T-cell (primary cell): ENCODE measurements at regions of chr19 and their contacts with region 1.

Region 1: GRCh38 chr19:17305517-17306284 is at the start of gene MRPL34:
- DNase-seq: peak; percentile 88 to 97 (median 91)
- ATAC-seq: peak; percentile 61 to 66 (median 63)
- H3K4me3 ChIP-seq: peak within 1 kb of the TSS; percentile 67 to 91
- H3K4me3 Mint-ChIP-seq: peak within 1 kb of the TSS; percentile 80 to 89 (median 85)
- H3K27ac ChIP-seq: peak within 1 kb of the TSS; percentile 59
- H3K27ac Mint-ChIP-seq: peak within 1 kb of the TSS; percentile 89 to 94
- H3K4me1 ChIP-seq: peaks cover 4 to 68% of the 10 kb centered on the region in 2 experiments
- H3K4me1 Mint-ChIP-seq: peaks cover 45 to 58% (median 49%) of the 10 kb centered on the region in 3 donors
- H3K27me3 ChIP-seq: no peaks in the 10 kb centered on the region
- H3K27me3 Mint-ChIP-seq: no peaks in the 10 kb centered on the region
- total RNA-seq, gene MRPL34: 37.6 to 87.0 (median 69.3) TPM

Region 2: DNA sequence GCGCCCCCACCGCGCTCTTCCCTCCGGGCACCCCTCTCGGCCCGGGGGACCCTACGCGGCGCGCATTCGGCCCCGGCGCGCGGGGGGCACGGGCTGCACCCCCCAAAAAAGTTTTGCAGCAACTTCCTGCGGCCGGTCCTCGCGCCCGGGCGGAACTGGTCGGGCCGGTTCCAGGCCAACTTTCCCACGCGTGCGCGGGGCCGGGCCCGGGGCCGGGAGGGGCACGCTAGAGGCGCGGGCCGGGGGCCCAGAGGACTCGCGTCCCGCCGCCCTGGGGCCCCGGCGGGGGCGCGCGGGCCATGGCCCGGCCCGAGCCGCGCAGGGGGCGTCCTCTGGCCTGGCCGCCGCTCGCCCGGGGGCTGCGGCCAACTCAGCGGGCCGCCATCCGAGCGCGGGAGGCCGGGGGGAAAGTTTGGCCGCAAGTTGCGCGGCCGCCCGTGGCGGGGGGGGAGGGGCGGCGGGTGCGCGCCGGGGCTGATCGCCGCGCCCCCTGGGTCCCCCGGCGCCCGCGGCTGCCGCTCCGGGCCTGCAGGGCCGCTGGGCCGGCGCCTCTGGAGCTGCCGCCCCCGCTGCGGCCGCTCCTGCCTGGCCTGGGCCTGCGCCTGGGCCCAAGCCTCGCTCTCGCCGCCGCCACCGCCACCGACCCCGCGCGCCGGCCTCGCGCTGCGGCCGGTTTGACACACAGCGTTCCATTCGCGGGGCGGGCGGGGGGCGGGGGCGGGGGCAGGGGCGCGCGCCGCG is 60.3 kb before region 1 on chr19 and contains the start of gene NR2F6:
- CTCF ChIA-PET with region 1: no interaction called
- POLR2A ChIA-PET with region 1: no interaction called
- DNase-seq: peak in 2 of 35 experiments; percentile 36 to 44
- ATAC-seq: peak; percentile 12 to 36 (median 29)
- H3K4me3 ChIP-seq: peak within 1 kb of the TSS; percentile 68 to 69
- H3K4me3 Mint-ChIP-seq: peak within 1 kb of the TSS; percentile 80 to 86 (median 82)
- H3K27ac ChIP-seq: no peak within 1 kb of the TSS
- H3K27ac Mint-ChIP-seq: peak within 1 kb of the TSS in 1 of 2 donors; percentile 74
- H3K4me1 ChIP-seq: peaks cover 0 to 19% of the 10 kb centered on the region in 2 experiments
- H3K4me1 Mint-ChIP-seq: peaks cover 0 to 16% (median 6%) of the 10 kb centered on the region in 3 donors
- H3K27me3 ChIP-seq: peaks cover 0 to 18% of the 10 kb centered on the region in 2 experiments
- H3K27me3 Mint-ChIP-seq: peaks cover 5 to 7% of the 10 kb centered on the region in 2 donors
- total RNA-seq, gene NR2F6: 0.55 to 6.4 (median 2.8) TPM

Region 3: DNA sequence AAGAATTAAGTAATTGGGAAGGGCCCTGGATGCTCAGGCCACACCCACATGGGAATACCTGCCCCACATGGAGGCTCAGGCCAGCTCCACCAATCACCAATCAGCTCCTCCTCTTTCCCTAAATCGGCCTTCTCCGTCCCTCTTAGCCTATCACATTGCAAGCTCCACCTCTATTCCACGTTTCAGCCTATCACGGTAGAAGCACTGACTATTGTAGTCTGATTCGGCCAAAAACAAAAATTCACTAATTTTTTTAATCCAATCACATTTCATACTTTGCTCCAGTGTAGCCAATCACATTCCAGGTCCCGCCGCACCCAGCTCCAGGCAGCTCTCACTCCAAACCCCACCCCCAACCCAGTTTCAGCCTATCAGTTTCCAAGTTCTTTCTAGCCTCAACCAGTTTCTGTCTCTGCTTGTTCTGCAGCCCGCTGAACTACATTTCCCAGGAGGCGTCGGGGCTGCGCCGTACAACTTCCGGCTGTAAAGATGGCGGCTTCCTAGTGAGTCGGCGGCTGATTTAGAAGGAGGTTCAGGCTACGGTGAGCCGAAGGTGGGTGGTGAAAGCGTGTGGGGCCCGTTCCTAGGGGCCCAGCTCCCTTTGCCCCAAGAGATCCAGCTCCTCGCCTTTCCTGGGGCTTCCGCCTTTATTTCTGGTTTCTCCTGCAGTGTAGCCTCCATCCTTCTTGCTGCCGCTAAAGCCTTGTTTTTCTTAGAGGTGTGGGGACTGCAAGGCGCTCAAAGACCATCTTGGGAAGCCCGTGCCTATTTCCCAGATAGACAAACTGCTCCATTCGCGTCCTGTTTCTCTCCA is 38.5 kb before region 1 on chr19 and contains the start of gene BABAM1:
- CTCF ChIA-PET with region 1: interaction called in 1 of 2 experiments, 20 read pairs
- POLR2A ChIA-PET with region 1: interaction called, 6 read pairs
- DNase-seq: peak; percentile 80 to 99 (median 96)
- ATAC-seq: peak; percentile 92 to 97 (median 96)
- H3K4me3 ChIP-seq: peak within 1 kb of the TSS; percentile 67 to 96
- H3K4me3 Mint-ChIP-seq: peak within 1 kb of the TSS; percentile 80 to 89 (median 85)
- H3K27ac ChIP-seq: peak within 1 kb of the TSS; percentile 59
- H3K27ac Mint-ChIP-seq: peak within 1 kb of the TSS; percentile 62 to 90
- H3K4me1 ChIP-seq: peaks cover 15 to 31% of the 10 kb centered on the region in 2 experiments
- H3K4me1 Mint-ChIP-seq: peaks cover 23 to 30% (median 25%) of the 10 kb centered on the region in 3 donors
- H3K27me3 ChIP-seq: no peaks in the 10 kb centered on the region
- H3K27me3 Mint-ChIP-seq: no peaks in the 10 kb centered on the region
- total RNA-seq, gene BABAM1: 76.7 to 130 (median 117) TPM

Region 4: DNA sequence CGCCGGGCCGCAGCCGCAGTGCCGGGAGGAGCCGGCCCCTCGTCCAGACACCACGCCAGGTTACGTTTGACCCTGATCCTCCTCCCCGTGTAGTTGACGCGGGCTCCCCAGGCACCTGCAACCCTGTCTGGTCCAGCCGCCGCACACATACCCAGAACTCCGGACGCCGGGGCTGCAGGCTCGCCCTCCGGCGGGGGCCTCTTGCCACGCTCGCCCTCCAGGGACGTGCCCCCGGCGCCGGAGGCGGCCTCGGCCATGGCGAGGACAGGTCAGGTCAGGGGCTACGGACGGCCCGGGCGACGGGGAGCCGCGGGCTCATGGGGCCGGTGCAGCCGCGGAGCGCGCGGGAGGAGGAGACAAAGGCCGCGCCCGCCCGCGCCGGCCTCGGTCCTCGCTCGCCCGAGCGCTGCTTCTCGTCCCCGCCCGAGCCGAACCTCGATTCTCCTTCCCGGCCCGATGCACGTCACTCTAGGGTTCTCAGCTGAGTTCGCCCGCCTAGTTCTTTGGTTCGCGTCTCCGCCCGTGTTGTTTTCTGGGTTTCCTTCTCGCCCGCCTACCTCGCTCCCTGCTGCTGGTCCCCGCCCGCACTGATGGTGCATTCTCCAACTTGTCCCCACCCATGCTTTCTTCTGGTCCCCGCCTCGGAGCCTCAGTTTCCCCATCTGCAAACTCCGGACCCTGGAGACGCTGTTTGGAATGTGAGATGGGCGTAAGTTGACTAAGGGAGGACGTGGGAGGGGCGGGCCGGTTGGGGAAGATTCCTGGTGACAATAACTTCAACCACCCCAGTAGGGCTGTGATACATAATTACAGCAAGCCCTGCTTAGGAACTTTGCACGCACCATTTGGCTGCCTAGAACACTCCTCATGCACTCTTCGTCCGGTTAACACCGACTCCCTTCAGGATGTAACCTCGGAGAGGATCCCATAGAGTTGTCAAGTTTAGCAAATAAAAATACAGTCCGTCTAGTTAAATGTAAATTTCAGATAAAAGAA is 29.0 kb after region 1 on chr19 and contains the start of gene ANO8:
- CTCF ChIA-PET with region 1: interaction called, 5 to 10 read pairs
- POLR2A ChIA-PET with region 1: interaction called, 3 to 10 read pairs
- DNase-seq: peak; percentile 89 to 98 (median 95)
- ATAC-seq: peak; percentile 65 to 69 (median 68)
- H3K4me3 ChIP-seq: peak within 1 kb of the TSS; percentile 56 to 71
- H3K4me3 Mint-ChIP-seq: peak within 1 kb of the TSS; percentile 84 to 92 (median 86)
- H3K27ac ChIP-seq: peak within 1 kb of the TSS; percentile 47
- H3K27ac Mint-ChIP-seq: peak within 1 kb of the TSS; percentile 80 to 91
- H3K4me1 ChIP-seq: peaks cover 9 to 61% of the 10 kb centered on the region in 2 experiments
- H3K4me1 Mint-ChIP-seq: peaks cover 42 to 53% (median 49%) of the 10 kb centered on the region in 3 donors
- H3K27me3 ChIP-seq: peaks cover 0 to 3% of the 10 kb centered on the region in 2 experiments
- H3K27me3 Mint-ChIP-seq: no peaks in the 10 kb centered on the region
- total RNA-seq, gene ANO8: 18.3 to 27.4 (median 24.9) TPM

Region 5: DNA sequence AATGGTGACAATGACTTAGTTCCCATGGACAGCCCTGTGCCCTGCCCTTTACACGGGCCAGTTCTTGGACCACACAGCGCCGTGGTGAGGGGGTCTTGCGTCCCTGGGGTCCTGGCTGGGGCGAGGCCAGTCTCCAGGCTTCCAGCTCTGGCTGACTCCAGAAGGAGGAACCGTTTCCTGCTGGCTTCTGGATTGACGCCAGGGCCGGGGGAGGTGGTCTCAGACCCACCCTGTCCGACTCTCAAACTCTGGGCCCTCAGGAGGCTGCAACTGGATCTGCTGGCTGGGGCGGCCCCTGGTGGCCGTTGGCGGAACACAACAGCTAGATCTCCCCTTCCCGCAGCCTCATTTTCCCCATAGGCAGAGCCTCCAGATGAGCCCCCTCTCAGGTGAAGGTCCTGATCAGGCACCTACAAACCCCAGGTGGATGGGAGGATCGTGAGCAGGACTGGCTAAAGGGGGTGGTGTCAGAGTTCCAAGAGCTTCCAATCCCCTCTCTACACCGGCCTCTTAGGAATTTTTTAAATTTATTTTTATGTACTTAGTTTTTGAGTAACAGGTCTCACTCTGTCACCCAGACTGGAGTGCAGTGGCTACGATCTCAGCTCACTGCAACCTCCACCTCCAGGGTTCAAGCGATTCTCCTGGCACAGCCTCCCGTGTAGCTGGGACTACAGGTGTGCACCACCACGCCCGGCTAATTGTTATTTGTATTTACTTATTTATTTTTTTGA is 80.3 kb after region 1 on chr19:
- CTCF ChIA-PET with region 1: interaction called, 5 to 10 read pairs
- POLR2A ChIA-PET with region 1: no interaction called
- DNase-seq: peak in 33 of 35 experiments; percentile 17 to 78 (median 49)
- ATAC-seq: peak; percentile 23 to 51 (median 42)
- H3K4me3 ChIP-seq: no peak overlapping the region
- H3K4me3 Mint-ChIP-seq: no peak overlapping the region
- H3K27ac ChIP-seq: no peak overlapping the region
- H3K27ac Mint-ChIP-seq: no peak overlapping the region
- H3K4me1 ChIP-seq: peaks cover 2 to 17% of the 10 kb centered on the region in 2 experiments
- H3K4me1 Mint-ChIP-seq: peaks cover 5 to 13% (median 11%) of the 10 kb centered on the region in 3 donors
- H3K27me3 ChIP-seq: peaks cover 0 to 6% of the 10 kb centered on the region in 2 experiments
- H3K27me3 Mint-ChIP-seq: peaks cover 0 to 2% of the 10 kb centered on the region in 2 donors

Region 6: GRCh38 chr19:17466487-17466850 is 160.8 kb after region 1 on chr19:
- CTCF ChIA-PET with region 1: no interaction called
- POLR2A ChIA-PET with region 1: no interaction called
- DNase-seq: no peak
- ATAC-seq: no peak
- H3K4me3 ChIP-seq: no peak overlapping the region
- H3K4me3 Mint-ChIP-seq: no peak overlapping the region
- H3K27ac ChIP-seq: no peak overlapping the region
- H3K27ac Mint-ChIP-seq: no peak overlapping the region
- H3K4me1 ChIP-seq: peaks cover 2 to 27% of the 10 kb centered on the region in 2 experiments
- H3K4me1 Mint-ChIP-seq: peaks cover 22 to 36% (median 23%) of the 10 kb centered on the region in 3 donors
- H3K27me3 ChIP-seq: peaks cover 0 to 13% of the 10 kb centered on the region in 2 experiments
- H3K27me3 Mint-ChIP-seq: no peaks in the 10 kb centered on the region